ENCODE measurements at regions of chr12 and their contacts with region 1.

Region 1: GRCh38 chr12:31959161-31959700 is at the start of gene RESF1:
- DNase-seq: peak; percentile 95
- ATAC-seq: peak; percentile 99
- total RNA-seq, gene RESF1: 21.7 TPM

Region 2: GRCh38 chr12:31672521-31672920 is 286.7 kb before region 1 on chr12:
- intact Hi-C with region 1: loop called (anchors 10 kb)
- DNase-seq: no peak
- ATAC-seq: no peak

Region 3: GRCh38 chr12:31728917-31729640 is 230.2 kb before region 1 on chr12 and contains the start of gene AMN1:
- intact Hi-C with region 1: loop called (anchors 5 kb)
- DNase-seq: peak; percentile 100
- ATAC-seq: peak; percentile 99
- total RNA-seq, gene AMN1: 11.5 TPM

Region 4: GRCh38 chr12:31874961-31875608 is 84.1 kb before region 1 on chr12:
- intact Hi-C with region 1: loop called (anchors 5 kb)
- DNase-seq: peak; percentile 76
- ATAC-seq: peak; percentile 59

Region 5: GRCh38 chr12:31991815-31992214 is 32.6 kb after region 1 on chr12:
- intact Hi-C with region 1: no loop called
- DNase-seq: no peak
- ATAC-seq: no peak

Region 6: DNA sequence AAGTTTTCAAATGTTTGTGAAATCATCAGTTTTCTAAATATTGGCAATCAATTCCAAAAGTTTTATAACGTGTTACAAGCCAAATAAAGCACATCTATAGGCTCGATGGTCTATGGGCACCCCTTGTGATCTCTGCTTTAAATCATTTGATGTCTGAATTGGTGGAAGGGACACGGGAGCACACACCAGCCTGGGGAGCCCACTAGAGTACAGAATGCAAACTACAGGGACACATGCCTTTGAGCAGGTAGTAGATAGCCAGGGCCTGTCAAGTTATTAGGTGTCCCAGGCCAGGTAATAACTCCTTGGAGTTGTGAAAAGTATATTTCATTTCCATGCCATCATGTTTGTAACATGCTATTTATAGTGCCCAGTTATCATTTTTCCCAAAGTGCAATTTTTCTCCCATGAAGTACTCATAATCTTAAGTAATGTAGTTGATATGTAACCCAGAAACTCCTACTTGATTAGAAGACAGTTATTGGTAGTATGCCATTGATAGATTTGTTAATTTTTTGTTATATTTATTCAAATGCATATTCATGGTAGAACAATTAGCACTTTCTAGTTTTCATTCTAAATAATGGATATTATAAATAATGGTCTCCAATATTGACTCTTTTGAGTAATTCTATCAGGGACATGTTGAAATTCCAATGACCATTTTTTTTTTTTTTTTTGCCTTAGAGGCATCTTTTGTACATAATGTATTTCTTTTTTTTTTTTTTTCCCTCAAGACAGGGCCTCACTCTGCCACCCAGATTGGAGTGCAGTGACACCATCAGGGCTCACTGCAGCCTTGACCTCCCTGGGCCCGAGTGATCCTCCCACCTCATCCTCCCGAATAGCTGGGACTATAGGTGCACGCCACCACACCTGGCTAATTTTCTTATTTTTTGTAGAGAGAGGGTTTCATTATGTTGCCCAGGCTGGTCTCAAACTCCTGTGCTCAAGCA is 343.3 kb after region 1 on chr12:
- intact Hi-C with region 1: loop called (anchors 10 kb)
- DNase-seq: peak; percentile 57
- ATAC-seq: no peak

Region 7: DNA sequence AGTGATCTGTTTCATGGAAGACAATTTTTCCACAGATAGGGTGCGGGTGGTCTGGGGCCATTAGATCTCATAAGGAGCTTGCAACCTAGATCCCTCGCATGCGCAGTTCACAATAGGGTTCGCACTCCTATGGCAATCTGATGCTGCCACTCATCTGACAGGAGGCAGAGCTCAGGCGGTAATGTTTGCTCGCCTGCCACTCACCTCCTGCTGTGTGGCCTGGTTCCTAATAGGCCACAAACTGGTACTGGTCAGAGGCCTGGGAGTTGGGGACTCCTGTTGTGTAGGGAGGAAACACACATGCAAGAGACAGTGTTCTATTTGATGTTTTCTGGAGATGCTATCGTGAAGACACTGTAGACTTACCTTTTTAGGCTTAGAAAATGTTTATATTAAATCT is 363.1 kb after region 1 on chr12:
- intact Hi-C with region 1: no loop called
- DNase-seq: no peak
- ATAC-seq: no peak

Measured in Right ventricle myocardium inferior (tissue), 1 donor.